Thyroid gland (tissue), 4 donors: ENCODE measurements at regions of chr15 and their contacts with region 1.

Region 1: GRCh38 chr15:42137431-42138261 is 18.8 kb downstream of the PLA2G4F start:
- DNase-seq: peak in 1 of 2 donors; percentile 28
- H3K4me3 ChIP-seq: no peak overlapping the region
- H3K27ac ChIP-seq: no peak overlapping the region
- H3K4me1 ChIP-seq: no peaks in the 10 kb centered on the region
- H3K27me3 ChIP-seq: no peaks in the 10 kb centered on the region
- CTCF ChIP-seq: peak; percentile 10 to 69 (median 54)
- POLR2A ChIP-seq: no peak

Region 2: DNA sequence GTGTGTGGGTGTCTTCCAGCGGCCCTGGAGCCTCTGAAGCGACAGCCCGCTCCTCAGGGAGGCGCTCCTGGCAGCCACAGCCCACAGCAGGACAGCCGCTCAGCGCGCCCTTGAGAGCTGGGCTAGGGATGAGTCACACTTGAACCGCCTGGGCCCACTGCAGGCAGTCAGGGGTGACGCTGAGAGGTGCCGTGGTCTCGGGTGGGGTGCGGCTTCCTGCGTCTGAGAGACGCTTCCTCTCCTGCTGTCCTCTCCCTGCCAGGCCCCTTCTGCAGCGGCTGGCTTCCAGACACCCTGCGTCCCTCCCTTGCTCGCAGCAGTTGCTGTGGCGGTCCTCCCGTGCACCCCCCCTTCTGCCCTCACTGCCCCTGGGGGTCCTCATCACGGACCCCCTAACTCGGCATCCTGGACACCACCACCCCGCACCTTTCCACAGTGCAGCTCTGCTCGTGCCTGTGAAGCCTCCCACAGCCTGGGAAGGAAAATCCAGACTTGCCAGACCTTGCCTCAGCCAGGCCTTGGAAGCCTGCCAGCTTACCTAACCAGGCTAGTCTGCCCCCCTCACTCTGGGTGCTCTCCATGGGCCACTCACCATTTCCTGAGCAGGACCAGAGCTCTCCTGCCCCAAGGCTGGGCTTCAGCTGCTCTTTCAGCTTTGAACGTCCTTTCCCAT is 242.7 kb before region 1 on chr15:
- intact Hi-C with region 1: no loop called
- DNase-seq: peak; percentile 97 to 98
- H3K4me3 ChIP-seq: peak overlapping the region in 1 of 3 donors; percentile 20
- H3K27ac ChIP-seq: peak overlapping the region; percentile 59 to 77 (median 68)
- H3K4me1 ChIP-seq: peaks cover 38 to 53% of the 10 kb centered on the region in 2 donors
- H3K27me3 ChIP-seq: no peaks in the 10 kb centered on the region
- CTCF ChIP-seq: peak in 1 of 6 experiments; percentile 9
- POLR2A ChIP-seq: no peak

Region 3: GRCh38 chr15:41989259-41989933 is 148.2 kb before region 1 on chr15:
- intact Hi-C with region 1: loop called (anchors 10 kb)
- DNase-seq: peak; percentile 84 to 86
- H3K4me3 ChIP-seq: no peak overlapping the region
- H3K27ac ChIP-seq: no peak overlapping the region
- H3K4me1 ChIP-seq: peaks cover 17 to 20% of the 10 kb centered on the region in 2 donors
- H3K27me3 ChIP-seq: no peaks in the 10 kb centered on the region
- CTCF ChIP-seq: peak; percentile 96 to 100 (median 98)
- POLR2A ChIP-seq: no peak

Region 4: DNA sequence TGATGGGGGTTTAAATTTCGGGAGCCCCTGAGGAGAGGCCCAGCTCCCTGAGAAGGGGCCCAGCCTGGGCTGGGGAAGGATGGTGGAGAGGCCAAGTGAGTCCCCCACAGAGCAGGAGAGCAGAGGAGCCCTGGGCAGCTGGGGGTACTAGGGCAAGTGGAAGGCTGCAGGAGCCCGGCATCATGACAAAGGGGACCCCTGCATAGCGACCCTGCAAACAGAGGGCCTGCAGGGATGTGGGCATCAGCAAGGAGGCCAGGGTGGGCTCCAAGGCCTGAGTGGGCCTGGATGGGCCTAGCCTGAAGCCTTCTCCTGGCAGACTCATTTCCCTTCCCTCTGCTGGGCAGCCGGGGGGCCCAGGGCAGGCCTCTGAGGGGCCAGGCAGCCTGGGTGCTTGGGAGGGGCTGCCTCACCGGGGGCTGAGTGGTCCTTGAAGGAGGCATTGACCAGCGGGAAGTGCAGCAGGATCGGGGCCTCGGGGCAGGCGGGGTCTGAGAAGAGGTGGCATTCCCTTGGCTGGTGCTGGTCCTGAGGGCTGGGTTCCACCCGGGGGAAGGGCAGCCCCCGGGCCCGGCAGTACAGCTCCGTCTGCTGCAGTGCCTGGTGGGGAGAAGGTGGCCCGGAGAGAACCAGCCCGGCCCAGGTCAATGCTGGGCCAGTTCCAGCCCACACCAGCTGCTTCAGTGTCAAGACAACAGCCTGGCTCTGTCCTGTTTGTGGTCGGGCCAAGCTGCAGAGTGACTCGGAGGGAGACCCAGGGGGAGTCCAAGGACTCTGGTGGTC is 68.0 kb before region 1 on chr15:
- intact Hi-C with region 1: loop called (anchors 5 kb)
- DNase-seq: no peak
- H3K4me3 ChIP-seq: no peak overlapping the region
- H3K27ac ChIP-seq: no peak overlapping the region
- H3K4me1 ChIP-seq: no peaks in the 10 kb centered on the region
- H3K27me3 ChIP-seq: no peaks in the 10 kb centered on the region
- CTCF ChIP-seq: no peak
- POLR2A ChIP-seq: no peak